A549 (cell line): ENCODE measurements at regions of chr6 and their contacts with region 1.

Region 1: GRCh38 chr6:138465007-138465645 is 34.2 kb downstream of the NHSL1 start:
- DNase-seq: peak; percentile 10 to 68
- ATAC-seq: peak; percentile 72 to 75
- H3K4me3 ChIP-seq: no peak overlapping the region
- H3K27ac ChIP-seq: peak overlapping the region; percentile 79 to 81
- H3K4me1 ChIP-seq: peaks cover 46% of the 10 kb centered on the region
- CTCF ChIP-seq: no peak
- EP300 ChIP-seq: no peak
- POLR2A ChIP-seq: no peak
- RAD21 ChIP-seq: no peak

Region 2: GRCh38 chr6:138509371-138509770 is 44.2 kb after region 1 on chr6:
- CTCF ChIA-PET with region 1: interaction called, 12 read pairs
- POLR2A ChIA-PET with region 1: no interaction called
- DNase-seq: peak; percentile 27 to 62
- ATAC-seq: peak; percentile 56 to 80; a peak in 3 of 6 replicates
- H3K4me3 ChIP-seq: no peak overlapping the region
- H3K27ac ChIP-seq: no peak overlapping the region
- H3K4me1 ChIP-seq: peaks cover 30% of the 10 kb centered on the region; the same call in 2 of the 3 replicates
- CTCF ChIP-seq: peak; percentile 67
- EP300 ChIP-seq: no peak
- POLR2A ChIP-seq: no peak
- RAD21 ChIP-seq: peak; percentile 75 to 83